Activated CD4-positive, alpha-beta memory T cell treated with anti-CD3 and anti-CD28 coated beads, Interleukin-2, amount 10 ng/mL, durations not matched to agents 7 days and 5 days (primary cell): ENCODE measurements at regions of chr2 and their contacts with region 1.

Region 1: GRCh38 chr2:24827321-24828237 is 34.4 kb downstream of the CENPO start:
- DNase-seq: peak; percentile 81
- H3K4me3 Mint-ChIP-seq: no peak overlapping the region
- H3K27ac Mint-ChIP-seq: peak overlapping the region; percentile 41
- H3K4me1 Mint-ChIP-seq: peaks cover 23% of the 10 kb centered on the region
- H3K27me3 Mint-ChIP-seq: no peaks in the 10 kb centered on the region

Region 2: GRCh38 chr2:24409700-24410556 is 417.7 kb before region 1 on chr2:
- CTCF ChIA-PET with region 1: interaction called, 54 read pairs
- POLR2A ChIA-PET with region 1: interaction called, 5 read pairs
- DNase-seq: peak; percentile 29
- H3K4me3 Mint-ChIP-seq: no peak overlapping the region
- H3K27ac Mint-ChIP-seq: no peak overlapping the region
- H3K4me1 Mint-ChIP-seq: peaks cover 2% of the 10 kb centered on the region
- H3K27me3 Mint-ChIP-seq: peaks cover 4% of the 10 kb centered on the region

Region 3: DNA sequence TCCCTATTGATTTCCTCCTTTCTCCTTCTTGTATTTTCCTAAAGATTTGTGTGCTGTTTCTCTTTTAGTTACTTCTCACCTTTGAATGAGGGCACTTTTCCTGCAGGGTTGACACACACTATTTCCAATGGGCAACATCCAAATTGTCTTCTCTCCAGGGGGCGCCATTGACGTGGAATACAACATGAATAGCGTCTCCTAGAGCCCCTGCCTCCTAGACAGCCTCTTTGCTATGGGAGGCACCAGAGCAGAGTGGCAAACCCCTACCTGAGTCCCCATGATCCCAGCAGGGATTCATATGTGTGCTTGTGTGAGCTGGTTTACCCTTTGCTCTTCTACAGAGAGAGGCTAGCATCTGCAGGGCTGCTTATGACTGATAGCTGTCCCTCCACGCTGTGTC is 405.9 kb before region 1 on chr2:
- CTCF ChIA-PET with region 1: interaction called, 26 read pairs
- POLR2A ChIA-PET with region 1: no interaction called
- DNase-seq: peak; percentile 53
- H3K4me3 Mint-ChIP-seq: no peak overlapping the region
- H3K27ac Mint-ChIP-seq: no peak overlapping the region
- H3K4me1 Mint-ChIP-seq: no peaks in the 10 kb centered on the region
- H3K27me3 Mint-ChIP-seq: peaks cover 2% of the 10 kb centered on the region

Region 4: GRCh38 chr2:24613154-24613814 is 214.3 kb before region 1 on chr2:
- CTCF ChIA-PET with region 1: interaction called, 48 read pairs
- POLR2A ChIA-PET with region 1: no interaction called
- DNase-seq: peak; percentile 60
- H3K4me3 Mint-ChIP-seq: no peak overlapping the region
- H3K27ac Mint-ChIP-seq: peak overlapping the region; percentile 79
- H3K4me1 Mint-ChIP-seq: peaks cover 11% of the 10 kb centered on the region
- H3K27me3 Mint-ChIP-seq: no peaks in the 10 kb centered on the region

Region 5: DNA sequence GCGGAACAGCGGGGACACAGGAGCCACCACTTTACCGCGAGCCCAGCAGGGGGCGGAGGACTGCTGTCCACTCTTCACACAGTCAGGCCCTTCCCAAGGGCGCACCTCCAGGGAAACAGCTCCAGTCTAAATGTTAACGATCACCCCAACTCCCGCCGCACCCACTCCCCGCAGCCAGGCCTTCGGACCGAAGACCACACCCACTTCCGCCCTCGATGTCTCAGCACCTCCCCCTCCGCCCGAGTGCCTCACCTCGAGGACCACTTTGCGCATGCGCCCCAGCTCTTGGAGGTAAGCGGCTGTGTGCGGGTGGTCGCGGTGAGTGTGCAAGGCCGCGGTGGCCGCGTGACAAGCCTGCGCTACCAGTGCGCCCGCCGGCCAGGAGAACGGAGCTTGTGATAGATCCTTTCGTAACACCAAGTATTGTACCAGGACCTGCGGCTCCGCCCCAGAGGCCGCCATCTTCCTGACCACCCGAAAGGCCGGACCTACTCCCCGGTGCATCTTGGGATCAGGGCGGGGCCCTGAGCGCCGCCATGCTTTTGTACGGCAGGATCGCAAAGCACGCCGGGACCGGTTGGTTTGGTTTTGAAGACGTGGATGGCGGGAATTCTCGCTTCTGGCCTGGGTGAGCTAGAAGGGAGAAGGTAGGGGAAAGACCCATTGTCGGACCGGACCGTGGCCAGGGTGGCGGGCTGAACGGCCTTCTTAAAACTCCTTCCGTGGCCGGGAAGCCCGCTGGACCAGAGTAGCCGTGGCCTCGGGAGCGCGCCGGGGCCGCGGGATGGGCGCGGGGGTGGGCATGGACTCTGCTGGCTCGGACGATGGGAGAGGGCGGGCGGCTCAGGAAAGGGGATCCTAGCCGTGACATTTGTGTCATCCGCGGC is 34.5 kb before region 1 on chr2 and contains the starts of genes CENPO and PTRHD1:
- CTCF ChIA-PET with region 1: interaction called, 9 read pairs
- POLR2A ChIA-PET with region 1: interaction called, 10 read pairs
- DNase-seq: peak; percentile 96
- H3K4me3 Mint-ChIP-seq: peak within 1 kb of the TSS; percentile 96
- H3K27ac Mint-ChIP-seq: peak within 1 kb of the TSS; percentile 98
- H3K4me1 Mint-ChIP-seq: peaks cover 53% of the 10 kb centered on the region
- H3K27me3 Mint-ChIP-seq: no peaks in the 10 kb centered on the region
- total RNA-seq, gene CENPO: 40.3 to 42.9 TPM
- total RNA-seq, gene PTRHD1: 25.4 to 25.5 TPM

Region 6: DNA sequence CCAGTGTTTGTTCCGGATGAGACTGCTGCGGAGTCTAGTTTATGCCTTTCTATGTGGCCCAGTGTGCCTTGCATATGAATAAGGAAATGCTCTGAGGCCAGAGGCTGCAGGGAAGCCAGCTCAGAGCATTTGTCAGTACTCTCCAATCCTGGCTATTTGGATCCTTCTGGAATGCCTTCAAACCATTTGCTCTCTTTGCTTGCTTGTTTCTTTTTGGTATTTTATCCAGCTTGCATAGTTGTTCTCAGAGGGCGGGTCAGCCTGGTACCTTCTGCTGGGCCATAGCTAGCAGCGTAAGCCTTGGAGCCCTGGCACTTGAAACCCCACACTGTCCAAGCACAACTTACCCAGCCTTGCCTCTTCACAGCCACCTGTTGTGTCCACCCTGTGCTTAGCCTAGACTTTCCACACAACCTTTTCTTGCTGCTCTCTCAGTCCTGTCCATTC is 13.9 kb before region 1 on chr2:
- CTCF ChIA-PET with region 1: interaction called, 22 read pairs
- POLR2A ChIA-PET with region 1: no interaction called
- DNase-seq: no peak
- H3K4me3 Mint-ChIP-seq: no peak overlapping the region
- H3K27ac Mint-ChIP-seq: peak overlapping the region; percentile 3
- H3K4me1 Mint-ChIP-seq: peaks cover 17% of the 10 kb centered on the region
- H3K27me3 Mint-ChIP-seq: no peaks in the 10 kb centered on the region